Astrocyte of the cerebellum (primary cell): ENCODE measurements at regions of chr10 and their contacts with region 1.

Region 1: DNA sequence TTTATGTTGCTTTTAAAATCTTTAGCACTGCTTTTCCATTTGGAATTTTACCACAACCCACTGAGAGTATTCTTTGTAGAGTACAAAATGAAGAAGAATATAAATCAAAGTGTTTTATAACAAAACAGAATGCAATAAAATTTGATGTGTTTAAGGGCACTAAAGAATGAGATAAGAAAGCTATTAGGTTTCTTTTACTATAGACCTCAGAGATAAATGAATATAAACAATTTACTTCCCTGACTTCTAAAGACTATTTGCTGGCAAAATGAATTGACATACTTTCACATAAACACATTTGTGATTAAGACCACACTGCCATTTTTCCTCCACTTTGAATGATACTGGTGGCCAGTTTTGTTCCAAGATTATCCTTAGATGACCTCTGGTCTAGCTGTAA is 124.5 kb downstream of the ITGA8 start:
- DNase-seq: no peak
- H3K4me3 ChIP-seq: no peak overlapping the region
- CTCF ChIP-seq: no peak

Region 2: GRCh38 chr10:15642095-15642494 is 46.8 kb after region 1 on chr10:
- in situ Hi-C with region 1: loop called (anchors 5 kb)
- DNase-seq: peak; percentile 32
- H3K4me3 ChIP-seq: no peak overlapping the region
- CTCF ChIP-seq: no peak